ENCODE measurements at regions of chr21 and their contacts with region 1.

Region 1: GRCh38 chr21:42171091-42172053 is 47.6 kb upstream of the ABCG1 start:
- DNase-seq: no peak
- H3K4me3 ChIP-seq: no peak overlapping the region
- H3K27ac ChIP-seq: no peak overlapping the region
- H3K4me1 ChIP-seq: peaks cover 0 to 5% (median 0%) of the 10 kb centered on the region in 6 donors
- H3K27me3 ChIP-seq: no peaks in the 10 kb centered on the region
- CTCF ChIP-seq: no peak
- POLR2A ChIP-seq: no peak

Region 2: GRCh38 chr21:42135386-42136052 is 35.9 kb before region 1 on chr21:
- intact Hi-C with region 1: no loop called
- DNase-seq: no peak
- H3K4me3 ChIP-seq: no peak overlapping the region
- H3K27ac ChIP-seq: no peak overlapping the region
- H3K4me1 ChIP-seq: peaks cover 0 to 5% (median 0%) of the 10 kb centered on the region in 6 donors
- H3K27me3 ChIP-seq: no peaks in the 10 kb centered on the region
- CTCF ChIP-seq: no peak
- POLR2A ChIP-seq: no peak

Region 3: GRCh38 chr21:42258153-42258884 is 86.9 kb after region 1 on chr21:
- intact Hi-C with region 1: loop called (anchors 5 kb)
- DNase-seq: peak; percentile 93
- H3K4me3 ChIP-seq: no peak overlapping the region
- H3K27ac ChIP-seq: peak overlapping the region in 2 of 8 donors; percentile 2 to 21
- H3K4me1 ChIP-seq: peaks cover 19 to 98% (median 86%) of the 10 kb centered on the region in 6 donors
- H3K27me3 ChIP-seq: peaks cover 0 to 4% (median 0%) of the 10 kb centered on the region in 7 donors
- CTCF ChIP-seq: peak; percentile 80 to 95 (median 90)
- POLR2A ChIP-seq: no peak

Region 4: GRCh38 chr21:42593007-42593806 is 421.8 kb after region 1 on chr21:
- intact Hi-C with region 1: no loop called
- DNase-seq: peak; percentile 90
- H3K4me3 ChIP-seq: peak overlapping the region in 1 of 8 donors; percentile 42
- H3K27ac ChIP-seq: no peak overlapping the region
- H3K4me1 ChIP-seq: peaks cover 0 to 24% (median 17%) of the 10 kb centered on the region in 6 donors
- H3K27me3 ChIP-seq: peaks cover 0 to 42% (median 0%) of the 10 kb centered on the region in 7 donors
- CTCF ChIP-seq: peak; percentile 44 to 81 (median 66)
- POLR2A ChIP-seq: no peak